GM12878 (cell line): ENCODE measurements at regions of chr4 and their contacts with region 1.

Region 1: GRCh38 chr4:131430302-131430701 is 1718.8 kb upstream of the PCDH10 start:
- DNase-seq: no peak
- ATAC-seq: peak; percentile 85
- H3K4me3 ChIP-seq: no peak overlapping the region
- H3K27ac ChIP-seq: no peak overlapping the region
- H3K4me1 ChIP-seq: no peaks in the 10 kb centered on the region
- H3K27me3 ChIP-seq: no peaks in the 10 kb centered on the region
- CTCF ChIP-seq: peak; percentile 37 to 45 (median 42); a peak in 5 of 6 replicates
- EP300 ChIP-seq: no peak
- POLR2A ChIP-seq: no peak
- RAD21 ChIP-seq: peak; percentile 51

Region 2: GRCh38 chr4:131381055-131381454 is 49.2 kb before region 1 on chr4:
- CTCF ChIA-PET with region 1: no interaction called
- POLR2A ChIA-PET with region 1: no interaction called
- RAD21 ChIA-PET with region 1: no interaction called
- SMC1A ChIA-PET with region 1: no interaction called
- in situ Hi-C with region 1: no loop called
- intact Hi-C with region 1: no loop called
- DNase-seq: no peak
- ATAC-seq: no peak
- H3K4me3 ChIP-seq: no peak overlapping the region
- H3K27ac ChIP-seq: no peak overlapping the region
- H3K4me1 ChIP-seq: no peaks in the 10 kb centered on the region
- H3K27me3 ChIP-seq: no peaks in the 10 kb centered on the region
- CTCF ChIP-seq: no peak
- EP300 ChIP-seq: no peak
- POLR2A ChIP-seq: no peak
- RAD21 ChIP-seq: no peak

Region 3: GRCh38 chr4:131441004-131441688 is 10.8 kb after region 1 on chr4:
- CTCF ChIA-PET with region 1: interaction called, 5 read pairs
- POLR2A ChIA-PET with region 1: interaction called, 5 read pairs
- RAD21 ChIA-PET with region 1: interaction called, 5 read pairs
- SMC1A ChIA-PET with region 1: interaction called, 12 read pairs
- in situ Hi-C with region 1: no loop called
- intact Hi-C with region 1: no loop called
- DNase-seq: no peak
- ATAC-seq: peak; percentile 64
- H3K4me3 ChIP-seq: no peak overlapping the region
- H3K27ac ChIP-seq: no peak overlapping the region
- H3K4me1 ChIP-seq: no peaks in the 10 kb centered on the region
- H3K27me3 ChIP-seq: no peaks in the 10 kb centered on the region
- CTCF ChIP-seq: no peak
- EP300 ChIP-seq: no peak
- POLR2A ChIP-seq: no peak
- RAD21 ChIP-seq: no peak

Region 4: DNA sequence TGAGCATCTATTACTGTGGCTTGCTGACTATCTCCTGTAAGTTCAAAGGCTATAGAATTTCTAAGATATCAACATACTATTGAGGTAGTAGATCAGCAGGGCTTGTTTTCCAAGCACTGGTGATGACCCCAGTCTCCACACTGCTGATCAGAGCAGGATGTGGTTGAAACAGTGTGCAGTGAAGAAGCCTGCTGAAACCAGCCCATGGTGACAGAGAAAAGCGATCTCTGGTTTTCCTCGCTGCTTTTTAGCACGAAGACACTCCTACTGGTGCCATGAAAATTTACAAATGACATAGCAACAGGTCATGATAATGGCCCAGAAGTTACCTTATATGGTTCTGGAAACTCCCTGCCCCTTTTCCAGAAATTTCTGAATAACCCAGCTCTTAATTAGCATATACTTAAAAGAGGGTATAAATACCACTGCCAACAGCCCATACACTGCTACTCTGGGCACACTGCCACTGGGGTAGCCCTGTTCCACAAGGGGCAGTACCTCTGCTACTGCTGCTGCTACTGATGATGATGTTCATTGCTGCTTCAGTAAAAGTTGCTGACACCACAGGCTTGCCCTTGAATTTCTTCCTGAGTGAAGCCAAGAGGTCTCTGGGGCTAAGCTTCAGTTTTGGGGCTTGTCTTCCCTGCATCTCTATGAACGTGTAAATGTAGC is 29.3 kb after region 1 on chr4:
- CTCF ChIA-PET with region 1: interaction called, 11 read pairs
- POLR2A ChIA-PET with region 1: no interaction called
- RAD21 ChIA-PET with region 1: no interaction called
- SMC1A ChIA-PET with region 1: interaction called, 5 read pairs
- in situ Hi-C with region 1: no loop called
- intact Hi-C with region 1: no loop called
- DNase-seq: peak; percentile 43
- ATAC-seq: peak; percentile 96
- H3K4me3 ChIP-seq: no peak overlapping the region
- H3K27ac ChIP-seq: no peak overlapping the region; the same call in 1 of the 2 replicates
- H3K4me1 ChIP-seq: peaks cover 7% of the 10 kb centered on the region
- H3K27me3 ChIP-seq: no peaks in the 10 kb centered on the region
- CTCF ChIP-seq: 0 out of 6 replicates have a peak, but pooled peaks of 2 of the 3 experiments have one; percentile 7 to 19
- EP300 ChIP-seq: peak in 1 of 2 experiments; percentile 22; a peak in 1 of 4 replicates
- POLR2A ChIP-seq: no peak
- RAD21 ChIP-seq: no peak

Region 5: GRCh38 chr4:131499141-131499873 is 69.0 kb after region 1 on chr4:
- CTCF ChIA-PET with region 1: no interaction called
- POLR2A ChIA-PET with region 1: no interaction called
- RAD21 ChIA-PET with region 1: no interaction called
- SMC1A ChIA-PET with region 1: no interaction called
- in situ Hi-C with region 1: no loop called
- intact Hi-C with region 1: no loop called
- DNase-seq: no peak
- ATAC-seq: no peak
- H3K4me3 ChIP-seq: no peak overlapping the region
- H3K27ac ChIP-seq: no peak overlapping the region
- H3K4me1 ChIP-seq: no peaks in the 10 kb centered on the region
- H3K27me3 ChIP-seq: no peaks in the 10 kb centered on the region
- CTCF ChIP-seq: no peak
- EP300 ChIP-seq: no peak
- POLR2A ChIP-seq: no peak
- RAD21 ChIP-seq: no peak

Region 6: GRCh38 chr4:132015321-132015720 is 585.0 kb after region 1 on chr4:
- CTCF ChIA-PET with region 1: no interaction called
- POLR2A ChIA-PET with region 1: no interaction called
- RAD21 ChIA-PET with region 1: no interaction called
- SMC1A ChIA-PET with region 1: no interaction called
- in situ Hi-C with region 1: no loop called
- intact Hi-C with region 1: no loop called
- DNase-seq: no peak
- ATAC-seq: no peak
- H3K4me3 ChIP-seq: no peak overlapping the region
- H3K27ac ChIP-seq: no peak overlapping the region
- H3K4me1 ChIP-seq: no peaks in the 10 kb centered on the region
- H3K27me3 ChIP-seq: no peaks in the 10 kb centered on the region
- CTCF ChIP-seq: no peak
- EP300 ChIP-seq: no peak
- POLR2A ChIP-seq: no peak
- RAD21 ChIP-seq: no peak